AG04449 (cell line): ENCODE measurements at regions of chr5 and their contacts with region 1.

Region 1: DNA sequence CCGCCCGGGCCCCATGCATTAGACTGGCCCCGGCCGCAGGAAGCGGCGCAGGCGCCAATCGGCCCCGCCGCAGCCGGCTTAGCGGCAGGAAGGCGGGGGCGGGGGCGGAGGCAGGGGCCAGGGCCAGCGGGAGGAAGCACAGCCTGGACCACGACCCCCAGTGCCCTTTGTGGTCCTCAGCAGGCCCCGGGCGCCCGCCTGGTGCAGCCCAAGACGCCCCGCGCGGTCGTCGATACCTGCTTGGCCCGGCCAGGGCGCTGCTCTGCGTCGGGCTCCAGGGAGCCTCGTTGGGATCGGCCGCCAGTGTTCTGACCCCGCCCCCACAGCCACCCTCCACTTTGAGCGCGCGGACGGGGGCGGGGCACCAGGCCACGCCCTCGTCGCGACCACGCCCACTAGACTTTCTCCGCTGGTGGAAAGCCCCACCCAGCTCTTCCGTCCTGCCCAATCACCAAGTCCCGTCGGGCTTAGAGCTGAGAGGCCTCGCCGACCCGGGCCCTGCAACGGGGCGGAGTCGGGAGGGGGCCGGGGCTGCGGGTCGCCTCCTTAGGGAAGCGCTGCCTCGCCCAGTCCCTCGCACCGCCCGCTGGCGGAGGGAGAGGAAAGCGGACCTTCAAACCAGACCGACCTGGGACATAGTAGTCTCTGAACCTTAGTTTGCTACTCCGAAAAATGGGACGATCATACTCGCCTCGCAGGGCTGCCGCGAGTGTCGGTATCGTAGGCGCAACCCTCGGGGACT is at the start of gene PDLIM7:
- DNase-seq: peak; percentile 87
- H3K4me3 ChIP-seq: peak within 1 kb of the TSS; percentile 93
- CTCF ChIP-seq: peak; percentile 15

Region 2: DNA sequence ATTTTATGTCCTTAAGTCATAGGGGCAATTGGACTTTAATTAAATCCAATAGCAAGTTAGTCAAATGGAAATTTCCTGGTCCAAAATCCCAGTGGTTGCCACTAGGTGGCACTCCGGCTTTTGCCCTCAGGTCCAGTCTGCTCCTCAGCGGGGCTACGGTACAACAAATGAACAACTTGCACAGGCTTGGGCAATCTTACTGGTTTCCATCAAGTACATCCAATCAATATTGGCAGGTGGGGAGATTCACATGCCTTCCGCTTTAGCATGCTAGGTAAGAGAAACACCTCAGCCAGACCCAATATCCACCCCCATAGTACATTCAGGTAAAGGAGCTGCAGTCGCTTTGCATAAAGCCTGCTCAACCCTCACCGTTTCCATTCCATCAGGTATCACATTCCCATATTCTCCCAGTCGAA is 179.5 kb before region 1 on chr5:
- CTCF ChIA-PET with region 1: interaction called, 42 read pairs
- POLR2A ChIA-PET with region 1: no interaction called
- DNase-seq: peak; percentile 38
- H3K4me3 ChIP-seq: no peak overlapping the region
- CTCF ChIP-seq: peak; percentile 78

Region 3: GRCh38 chr5:177403792-177404640 is 93.4 kb before region 1 on chr5:
- CTCF ChIA-PET with region 1: interaction called, 66 read pairs
- POLR2A ChIA-PET with region 1: interaction called, 21 read pairs
- DNase-seq: no peak
- H3K4me3 ChIP-seq: peak overlapping the region; percentile 71
- CTCF ChIP-seq: peak; percentile 91

Region 4: GRCh38 chr5:177454397-177455035 is 42.9 kb before region 1 on chr5:
- CTCF ChIA-PET with region 1: interaction called, 16 read pairs
- POLR2A ChIA-PET with region 1: interaction called, 13 read pairs
- DNase-seq: no peak
- H3K4me3 ChIP-seq: peak overlapping the region; percentile 47
- CTCF ChIP-seq: peak; percentile 79

Region 5: GRCh38 chr5:177509381-177509951 is 12.0 kb after region 1 on chr5 and contains the start of gene DOK3:
- CTCF ChIA-PET with region 1: interaction called, 105 read pairs
- POLR2A ChIA-PET with region 1: interaction called, 22 read pairs
- DNase-seq: no peak
- H3K4me3 ChIP-seq: no peak within 1 kb of the TSS
- CTCF ChIP-seq: no peak

Region 6: DNA sequence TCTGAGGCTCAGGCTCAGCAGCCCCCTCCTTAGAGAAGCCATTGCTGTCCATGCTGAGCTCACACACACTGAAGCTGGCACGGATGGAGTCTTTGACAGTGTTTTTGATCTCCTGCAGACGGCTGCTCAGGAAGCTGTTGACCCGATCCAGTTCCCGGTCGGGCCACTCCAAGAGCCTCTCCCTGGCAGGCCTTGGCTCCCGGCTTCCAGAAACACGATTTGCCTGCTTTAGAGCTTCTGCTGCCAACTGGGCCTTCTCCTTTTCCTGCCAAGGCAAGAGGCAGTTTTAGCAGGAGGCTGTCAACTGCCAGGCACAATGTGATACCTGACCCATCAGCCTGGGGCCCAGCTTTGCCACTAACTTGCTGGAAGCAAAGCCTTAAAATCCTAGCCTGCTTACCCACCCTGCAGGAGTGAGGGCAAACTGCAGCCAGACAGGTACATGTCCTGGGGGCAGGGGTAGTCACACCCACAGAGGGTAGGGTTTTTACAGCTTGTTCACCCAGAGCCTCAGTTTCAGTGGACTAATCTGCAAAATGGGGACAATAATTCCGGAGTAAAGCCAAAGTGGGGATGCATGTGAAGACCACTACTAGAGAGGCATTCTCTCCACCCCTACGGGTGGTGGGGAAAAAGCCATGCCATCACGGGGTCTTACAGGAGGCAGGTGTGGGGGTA is 27.6 kb after region 1 on chr5:
- CTCF ChIA-PET with region 1: interaction called, 10 read pairs
- POLR2A ChIA-PET with region 1: interaction called, 6 read pairs
- DNase-seq: no peak
- H3K4me3 ChIP-seq: no peak overlapping the region
- CTCF ChIP-seq: no peak

Region 7: DNA sequence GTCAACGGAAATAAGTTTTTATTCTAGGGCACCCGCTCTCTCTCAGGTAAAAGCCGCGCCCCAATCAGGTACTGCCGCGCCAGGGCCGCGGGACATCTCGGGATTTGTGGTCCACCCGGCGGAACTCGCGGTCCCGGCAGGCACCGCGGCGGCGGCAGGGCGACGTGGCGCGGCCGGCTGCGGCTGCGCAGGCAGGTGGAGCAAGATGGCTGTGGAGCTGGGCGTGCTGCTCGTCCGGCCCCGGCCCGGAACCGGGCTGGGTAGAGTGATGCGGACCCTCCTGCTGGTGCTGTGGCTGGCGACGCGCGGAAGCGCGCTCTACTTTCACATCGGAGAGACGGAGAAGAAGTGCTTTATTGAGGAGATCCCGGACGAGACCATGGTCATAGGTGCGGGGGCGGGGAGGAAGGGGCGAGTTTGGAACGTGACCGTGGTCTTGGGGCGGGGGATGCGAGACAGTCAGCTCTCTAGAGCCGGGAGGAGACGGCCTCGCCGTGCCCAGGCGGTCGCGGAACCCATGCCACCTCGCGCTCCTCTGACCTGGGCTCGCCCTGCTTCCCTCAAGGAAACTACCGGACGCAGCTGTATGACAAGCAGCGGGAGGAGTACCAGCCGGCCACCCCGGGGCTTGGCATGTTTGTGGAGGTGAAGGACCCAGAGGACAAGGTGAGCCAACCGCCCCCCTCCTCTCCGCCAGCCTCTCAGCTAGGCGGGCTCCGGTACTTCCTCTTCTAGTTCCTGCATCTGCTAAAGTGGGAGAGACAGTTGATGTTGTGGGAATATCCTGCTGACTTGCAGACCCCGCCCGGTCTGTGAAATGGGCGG is 94.8 kb after region 1 on chr5 and contains the start of gene TMED9:
- CTCF ChIA-PET with region 1: interaction called, 6 read pairs
- POLR2A ChIA-PET with region 1: interaction called, 10 read pairs
- DNase-seq: no peak
- H3K4me3 ChIP-seq: peak within 1 kb of the TSS; percentile 98
- CTCF ChIP-seq: no peak